Gastrocnemius medialis (tissue), 4 donors: ENCODE measurements at regions of chr6 and their contacts with region 1.

Region 1: DNA sequence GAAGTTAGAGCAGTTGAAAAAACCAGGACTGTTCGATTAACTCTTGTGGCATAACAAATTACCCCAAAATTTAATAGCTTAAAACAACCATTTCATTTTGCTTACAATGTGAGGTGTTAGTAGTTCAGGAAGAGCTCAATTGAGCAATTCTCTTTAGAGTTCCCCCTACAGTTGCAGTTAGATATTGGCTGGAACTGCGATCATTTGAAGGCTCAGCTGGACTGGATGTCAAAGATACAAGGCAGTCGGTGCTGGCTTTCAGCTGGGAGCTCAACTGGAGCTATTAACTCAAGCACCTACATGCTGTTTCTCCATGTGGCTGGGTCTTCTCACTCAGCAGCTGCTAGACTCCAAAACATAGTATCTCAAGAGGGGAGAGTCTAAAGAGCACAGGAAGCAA is 96.0 kb upstream of the LOC128125822 start:
- DNase-seq: peak; percentile 11 to 43
- ATAC-seq: peak; percentile 62 to 70
- H3K4me3 ChIP-seq: peak overlapping the region in 1 of 4 donors; percentile 5
- H3K27ac ChIP-seq: peak overlapping the region; percentile 86 to 95 (median 92)
- H3K4me1 ChIP-seq: peaks cover 15 to 21% of the 10 kb centered on the region in 2 donors
- H3K27me3 ChIP-seq: no peaks in the 10 kb centered on the region
- CTCF ChIP-seq: peak in 2 of 5 experiments; percentile 12 to 17
- POLR2A ChIP-seq: no peak

Region 2: DNA sequence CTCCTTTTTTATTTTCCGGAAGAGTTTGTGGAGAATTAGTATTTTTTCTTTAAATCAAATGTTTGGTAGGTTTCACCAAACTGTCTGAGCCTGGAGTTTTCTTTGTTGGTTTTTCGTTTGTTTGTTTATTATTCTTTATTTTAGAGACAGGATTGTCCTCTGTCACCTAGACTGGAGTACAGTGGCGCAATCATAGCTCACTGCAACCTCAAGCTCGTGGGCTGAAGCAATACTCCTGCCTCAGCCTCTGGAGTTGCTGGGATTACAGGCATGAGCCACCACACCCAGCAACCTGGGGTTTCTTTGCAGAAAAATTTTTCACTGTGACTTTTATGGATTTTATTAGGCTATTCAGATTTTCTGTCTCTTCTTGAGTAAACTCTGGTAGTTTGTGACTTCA is 24.2 kb before region 1 on chr6:
- in situ Hi-C with region 1: no loop called
- intact Hi-C with region 1: loop called (anchors 2 kb)
- DNase-seq: peak; percentile 31 to 50
- ATAC-seq: peak; percentile 72 to 80
- H3K4me3 ChIP-seq: no peak overlapping the region
- H3K27ac ChIP-seq: peak overlapping the region; percentile 17 to 58 (median 44)
- H3K4me1 ChIP-seq: peaks cover 16 to 26% of the 10 kb centered on the region in 2 donors
- H3K27me3 ChIP-seq: no peaks in the 10 kb centered on the region
- CTCF ChIP-seq: no peak
- POLR2A ChIP-seq: no peak

Region 3: DNA sequence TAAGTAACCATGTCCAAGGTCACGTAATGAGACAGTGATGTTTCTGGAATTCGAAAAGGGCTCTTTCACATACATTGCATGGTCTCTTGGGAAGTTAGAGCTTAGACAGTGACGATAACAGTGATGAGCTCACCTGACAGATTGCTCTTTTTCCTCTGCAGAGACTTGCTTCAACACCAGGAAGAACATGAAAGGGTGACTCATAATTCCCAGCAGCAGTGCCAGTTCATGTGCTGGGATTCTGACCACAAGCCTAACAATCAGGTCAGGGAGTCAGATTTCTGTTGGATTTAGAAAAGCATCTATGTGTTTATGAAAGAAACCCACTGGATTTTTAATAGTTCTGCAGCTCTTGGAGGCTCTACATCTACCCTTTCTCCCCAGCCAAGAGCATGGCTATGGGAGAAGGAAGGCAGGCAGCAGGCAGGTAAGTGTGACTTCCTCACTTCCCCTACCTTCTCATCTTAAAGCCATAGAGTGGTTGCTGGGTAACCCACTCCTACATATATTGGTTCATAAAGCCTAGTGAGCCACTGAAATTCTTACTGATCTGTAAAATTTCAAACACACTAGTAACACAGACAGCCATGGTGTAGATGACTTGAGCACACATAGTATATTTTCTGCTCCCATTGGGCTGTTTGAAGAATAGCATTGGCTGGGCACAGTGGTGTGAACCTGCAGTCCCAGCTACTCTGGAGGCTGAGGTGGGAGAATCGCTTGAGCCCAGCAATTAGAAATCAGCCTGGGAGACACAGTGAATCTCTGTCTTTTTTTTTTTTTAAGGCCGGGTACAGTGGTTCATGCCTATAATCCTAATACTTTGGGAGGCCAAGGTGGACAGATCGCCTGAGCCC is 51.6 kb after region 1 on chr6:
- in situ Hi-C with region 1: no loop called
- intact Hi-C with region 1: loop called (anchors 5 kb)
- DNase-seq: peak; percentile 78 to 86
- ATAC-seq: peak; percentile 100
- H3K4me3 ChIP-seq: no peak overlapping the region
- H3K27ac ChIP-seq: peak overlapping the region; percentile 80 to 85 (median 82)
- H3K4me1 ChIP-seq: peaks cover 10 to 19% of the 10 kb centered on the region in 2 donors
- H3K27me3 ChIP-seq: no peaks in the 10 kb centered on the region
- CTCF ChIP-seq: peak in 1 of 5 experiments; percentile 12
- POLR2A ChIP-seq: no peak